ENCODE measurements at regions of chr22 and their contacts with region 1.

Region 1: GRCh38 chr22:40196628-40197360 is 19.1 kb downstream of the TNRC6B start:
- DNase-seq: no peak
- ATAC-seq: peak in 1 of 2 donors; percentile 42
- H3K4me3 ChIP-seq: no peak overlapping the region
- H3K27ac ChIP-seq: peak overlapping the region; percentile 30 to 49 (median 43)
- H3K4me1 ChIP-seq: peaks cover 50 to 83% of the 10 kb centered on the region in 2 donors
- H3K27me3 ChIP-seq: no peaks in the 10 kb centered on the region
- CTCF ChIP-seq: no peak
- POLR2A ChIP-seq: no peak

Region 2: DNA sequence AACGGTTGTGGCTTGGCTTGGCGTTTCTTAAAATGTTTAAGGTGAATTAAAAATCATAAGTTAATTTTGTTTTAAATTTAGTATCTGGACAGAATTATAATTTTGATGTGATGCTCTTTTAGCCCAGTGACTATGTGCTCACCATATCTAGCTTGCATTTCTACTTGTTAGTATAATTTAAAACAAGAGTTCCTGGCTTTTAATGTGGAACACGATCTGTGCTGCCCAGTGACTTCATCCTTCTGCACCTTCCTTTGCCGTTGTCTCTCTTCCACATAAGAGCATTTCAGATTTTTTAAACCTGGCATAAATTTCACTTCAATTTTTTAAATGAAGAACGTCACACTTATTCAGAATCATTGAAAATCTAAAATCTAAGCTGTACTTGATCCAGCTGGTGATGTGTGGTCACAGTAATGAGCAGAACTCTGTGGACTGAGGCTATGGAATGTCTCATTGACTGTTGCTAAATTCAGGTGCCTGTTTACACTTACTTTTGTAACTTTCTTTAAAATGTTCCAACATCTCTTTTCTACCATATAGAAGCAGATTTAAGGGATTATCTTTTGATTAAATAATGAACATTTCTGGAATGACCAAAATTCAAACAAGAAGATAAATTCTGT is 74.1 kb after region 1 on chr22:
- in situ Hi-C with region 1: no loop called
- intact Hi-C with region 1: loop called (anchors 5 kb)
- DNase-seq: no peak
- ATAC-seq: peak; percentile 56 to 70
- H3K4me3 ChIP-seq: no peak overlapping the region
- H3K27ac ChIP-seq: peak overlapping the region; percentile 63 to 87 (median 80)
- H3K4me1 ChIP-seq: peaks cover 16 to 23% of the 10 kb centered on the region in 2 donors
- H3K27me3 ChIP-seq: no peaks in the 10 kb centered on the region
- CTCF ChIP-seq: no peak
- POLR2A ChIP-seq: no peak